Activated CD4-positive, alpha-beta memory T cell treated with anti-CD3 and anti-CD28 coated beads for 36 hours (primary cell): ENCODE measurements at regions of chr16 and their contacts with region 1.

Region 1: DNA sequence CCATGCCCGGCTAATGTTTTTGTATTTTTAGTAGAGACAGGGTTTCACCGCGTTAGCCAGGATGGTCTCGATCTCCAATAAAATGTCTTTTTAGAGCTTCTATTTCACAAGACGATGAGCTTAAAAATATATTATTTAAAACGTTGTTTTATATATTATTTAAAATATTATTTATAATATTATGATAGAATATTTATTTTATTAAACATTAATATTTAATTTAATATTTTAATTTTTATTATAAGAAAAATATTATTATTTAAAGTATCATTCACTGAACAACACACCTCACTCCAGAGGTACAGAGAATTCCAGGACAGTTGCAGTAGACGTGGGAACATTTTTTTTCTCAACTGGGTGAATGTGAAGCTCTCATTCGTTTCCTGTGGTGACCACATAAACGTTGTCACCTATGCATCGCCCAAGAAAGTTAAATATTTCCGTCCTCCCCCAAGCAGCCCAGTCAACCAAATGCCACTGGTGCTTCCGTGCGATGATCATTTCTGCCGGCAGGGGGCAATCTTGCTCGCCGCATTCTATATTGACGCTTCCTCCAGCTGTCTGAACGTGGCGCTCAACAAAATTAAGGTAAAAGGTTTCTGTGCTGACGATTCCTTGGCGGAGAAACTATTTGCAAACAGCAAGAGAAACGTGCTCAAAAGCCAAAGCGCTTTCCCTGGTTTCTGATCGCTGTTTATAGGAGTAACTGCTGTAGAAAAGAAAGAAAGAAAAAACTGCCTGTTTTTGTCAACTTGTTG is 41.7 kb upstream of the PRSS54 start:
- DNase-seq: peak; percentile 92
- H3K4me3 Mint-ChIP-seq: no peak overlapping the region
- H3K27ac Mint-ChIP-seq: no peak overlapping the region
- H3K4me1 Mint-ChIP-seq: peaks cover 4% of the 10 kb centered on the region
- H3K27me3 Mint-ChIP-seq: peaks cover 5% of the 10 kb centered on the region

Region 2: GRCh38 chr16:58299757-58300349 is 36.7 kb before region 1 on chr16:
- CTCF ChIA-PET with region 1: interaction called, 19 read pairs
- POLR2A ChIA-PET with region 1: no interaction called
- intact Hi-C with region 1: no loop called
- DNase-seq: peak; percentile 42
- H3K4me3 Mint-ChIP-seq: no peak overlapping the region
- H3K27ac Mint-ChIP-seq: no peak overlapping the region
- H3K4me1 Mint-ChIP-seq: no peaks in the 10 kb centered on the region
- H3K27me3 Mint-ChIP-seq: peaks cover 8% of the 10 kb centered on the region

Region 3: DNA sequence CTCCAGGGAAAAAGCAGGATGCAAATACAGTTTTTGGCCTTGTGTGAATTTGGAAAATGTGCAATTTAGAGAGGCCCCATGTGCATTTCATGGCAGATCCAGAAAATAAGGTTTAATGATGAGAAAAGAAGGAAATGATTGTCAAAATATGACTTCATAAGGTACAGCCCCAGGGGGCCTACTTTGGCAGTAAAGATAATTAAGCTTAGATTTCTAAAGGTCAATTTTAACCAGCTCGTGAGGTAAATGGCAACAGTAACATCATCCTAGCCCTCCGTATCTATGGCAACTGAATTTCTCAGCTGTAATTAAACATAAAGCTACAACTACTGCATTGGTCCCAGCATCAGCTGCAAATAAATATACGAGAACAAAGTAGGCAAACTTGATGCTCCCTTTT is 11.7 kb before region 1 on chr16:
- CTCF ChIA-PET with region 1: interaction called, 25 read pairs
- POLR2A ChIA-PET with region 1: no interaction called
- intact Hi-C with region 1: no loop called
- DNase-seq: no peak
- H3K4me3 Mint-ChIP-seq: no peak overlapping the region
- H3K27ac Mint-ChIP-seq: no peak overlapping the region
- H3K4me1 Mint-ChIP-seq: no peaks in the 10 kb centered on the region
- H3K27me3 Mint-ChIP-seq: peaks cover 3% of the 10 kb centered on the region

Region 4: GRCh38 chr16:58409316-58409973 is 72.9 kb after region 1 on chr16:
- CTCF ChIA-PET with region 1: no interaction called
- POLR2A ChIA-PET with region 1: no interaction called
- intact Hi-C with region 1: no loop called
- DNase-seq: no peak
- H3K4me3 Mint-ChIP-seq: no peak overlapping the region
- H3K27ac Mint-ChIP-seq: no peak overlapping the region
- H3K4me1 Mint-ChIP-seq: no peaks in the 10 kb centered on the region
- H3K27me3 Mint-ChIP-seq: no peaks in the 10 kb centered on the region

Region 5: DNA sequence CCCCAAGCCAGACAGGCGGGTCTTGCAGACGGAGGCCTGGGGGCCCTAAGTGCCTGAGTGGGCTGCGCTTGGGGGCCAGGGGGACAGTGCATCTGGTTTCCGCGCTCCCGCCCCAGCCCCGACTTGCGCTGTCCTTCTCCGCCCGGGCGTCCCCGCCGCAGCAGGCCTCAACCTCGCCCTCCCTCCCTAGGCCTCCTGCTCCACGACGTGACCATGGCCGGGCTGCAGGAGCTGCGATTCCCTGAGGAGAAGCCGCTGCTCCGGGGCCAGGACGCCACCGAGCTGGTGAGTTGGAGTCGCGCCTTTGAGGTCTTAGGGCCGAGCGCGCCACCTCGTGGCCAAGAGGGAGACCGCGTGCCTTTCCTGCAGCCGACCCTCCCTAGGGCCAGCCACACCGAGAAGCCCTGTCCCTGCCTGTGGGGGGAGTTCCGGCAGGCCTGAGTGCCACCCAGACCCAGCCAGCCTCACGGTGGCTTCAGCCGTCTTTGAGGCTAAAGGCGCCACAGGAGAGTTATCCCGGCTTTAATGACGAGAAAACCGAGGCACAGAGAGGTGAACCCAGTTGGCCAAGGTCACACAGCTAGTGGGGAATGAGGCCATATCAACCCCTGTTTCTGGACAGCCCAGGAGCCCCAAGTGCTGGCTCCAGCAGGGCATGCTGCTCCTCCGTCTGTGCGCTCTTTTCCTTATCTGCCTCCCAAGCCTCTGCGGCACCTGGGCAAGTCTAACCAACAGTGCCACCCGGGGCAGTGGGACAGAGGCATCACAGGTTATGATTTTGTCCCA is 151.2 kb after region 1 on chr16:
- CTCF ChIA-PET with region 1: interaction called, 286 read pairs
- POLR2A ChIA-PET with region 1: interaction called, 6 read pairs
- intact Hi-C with region 1: loop called (anchors 1 kb)
- DNase-seq: peak; percentile 78
- H3K4me3 Mint-ChIP-seq: no peak overlapping the region
- H3K27ac Mint-ChIP-seq: no peak overlapping the region
- H3K4me1 Mint-ChIP-seq: no peaks in the 10 kb centered on the region
- H3K27me3 Mint-ChIP-seq: peaks cover 2% of the 10 kb centered on the region

Region 6: DNA sequence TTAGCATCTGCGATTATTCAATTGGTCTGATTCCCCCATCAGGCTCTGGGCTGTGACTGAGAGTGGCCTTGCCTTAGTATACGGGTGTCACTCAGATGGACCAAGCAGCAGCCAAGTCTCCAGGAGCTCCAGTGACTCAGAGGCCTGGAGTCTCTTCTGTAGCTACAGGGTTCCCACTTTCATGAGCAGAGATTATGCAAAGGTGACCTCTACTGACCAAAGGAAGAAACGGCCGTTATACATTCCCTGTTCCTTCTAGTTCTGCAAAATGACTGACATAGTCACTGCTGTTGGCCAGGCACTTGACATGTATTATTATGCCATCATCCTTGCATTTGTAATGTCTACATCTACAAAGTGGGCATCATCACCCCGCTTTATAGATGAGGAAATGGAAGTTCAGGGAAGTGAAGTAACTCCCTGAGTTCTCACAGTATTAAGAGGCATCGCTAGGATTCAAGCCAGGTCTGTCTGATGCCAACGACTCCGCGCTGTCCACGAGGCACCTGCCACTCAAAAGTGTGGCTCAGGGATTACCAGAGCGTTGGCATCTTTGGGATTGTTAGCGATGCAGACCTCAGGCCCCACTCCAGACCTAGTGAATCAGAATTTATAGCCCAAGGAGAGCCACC is 324.8 kb after region 1 on chr16:
- CTCF ChIA-PET with region 1: interaction called, 5 read pairs
- POLR2A ChIA-PET with region 1: no interaction called
- intact Hi-C with region 1: loop called (anchors 10 kb)
- DNase-seq: peak; percentile 14
- H3K4me3 Mint-ChIP-seq: no peak overlapping the region
- H3K27ac Mint-ChIP-seq: no peak overlapping the region
- H3K4me1 Mint-ChIP-seq: no peaks in the 10 kb centered on the region
- H3K27me3 Mint-ChIP-seq: no peaks in the 10 kb centered on the region